ENCODE measurements at regions of chr1 and their contacts with region 1.

Region 1: DNA sequence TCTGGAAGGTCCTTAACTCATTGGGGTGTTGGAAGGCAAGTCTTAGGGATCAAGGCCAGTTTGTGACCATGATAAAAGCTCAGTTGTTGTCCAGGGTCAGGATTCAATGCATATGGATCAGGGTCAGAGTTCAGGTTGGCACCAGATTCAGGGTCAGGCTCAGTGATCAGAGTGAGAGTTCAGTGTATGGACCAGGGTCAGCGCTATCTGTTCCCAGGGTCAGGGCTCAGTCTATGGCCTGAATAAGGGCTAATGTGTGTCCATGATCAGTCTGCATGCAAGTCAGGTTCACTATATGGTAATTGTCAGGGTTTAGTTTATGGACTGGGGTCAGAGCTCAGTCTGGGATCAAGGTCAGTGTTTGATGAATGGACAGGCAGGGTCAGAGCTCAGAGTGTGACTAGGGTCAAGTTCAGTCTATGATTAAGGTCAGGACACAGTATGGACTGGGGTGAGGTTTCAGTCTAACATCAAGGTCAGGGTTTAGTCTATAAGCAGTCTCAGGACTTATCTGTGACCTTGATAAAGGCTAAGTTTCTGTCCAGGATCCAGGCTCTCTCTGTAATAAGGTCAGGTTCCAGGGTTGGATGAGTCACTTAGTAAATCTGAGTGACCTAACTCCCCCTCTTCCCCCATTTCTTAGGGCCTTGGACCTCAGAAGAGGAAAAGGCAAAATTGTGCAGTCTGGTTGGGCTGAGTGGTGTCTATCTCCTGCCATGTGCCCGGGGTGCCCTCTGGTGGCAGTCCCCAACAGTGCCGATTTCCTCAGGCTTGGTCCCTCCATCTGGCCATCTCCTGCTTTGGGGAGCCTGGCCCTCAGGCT is 23.8 kb downstream of the KNCN start:
- DNase-seq: peak; percentile 85 to 88
- ATAC-seq: peak; percentile 85 to 92 (median 86)
- H3K4me3 ChIP-seq: no peak overlapping the region
- H3K27ac ChIP-seq: no peak overlapping the region
- H3K4me1 ChIP-seq: no peaks in the 10 kb centered on the region
- H3K27me3 ChIP-seq: peaks cover 0 to 10% (median 6%) of the 10 kb centered on the region in 3 donors
- CTCF ChIP-seq: peak; percentile 86

Region 2: DNA sequence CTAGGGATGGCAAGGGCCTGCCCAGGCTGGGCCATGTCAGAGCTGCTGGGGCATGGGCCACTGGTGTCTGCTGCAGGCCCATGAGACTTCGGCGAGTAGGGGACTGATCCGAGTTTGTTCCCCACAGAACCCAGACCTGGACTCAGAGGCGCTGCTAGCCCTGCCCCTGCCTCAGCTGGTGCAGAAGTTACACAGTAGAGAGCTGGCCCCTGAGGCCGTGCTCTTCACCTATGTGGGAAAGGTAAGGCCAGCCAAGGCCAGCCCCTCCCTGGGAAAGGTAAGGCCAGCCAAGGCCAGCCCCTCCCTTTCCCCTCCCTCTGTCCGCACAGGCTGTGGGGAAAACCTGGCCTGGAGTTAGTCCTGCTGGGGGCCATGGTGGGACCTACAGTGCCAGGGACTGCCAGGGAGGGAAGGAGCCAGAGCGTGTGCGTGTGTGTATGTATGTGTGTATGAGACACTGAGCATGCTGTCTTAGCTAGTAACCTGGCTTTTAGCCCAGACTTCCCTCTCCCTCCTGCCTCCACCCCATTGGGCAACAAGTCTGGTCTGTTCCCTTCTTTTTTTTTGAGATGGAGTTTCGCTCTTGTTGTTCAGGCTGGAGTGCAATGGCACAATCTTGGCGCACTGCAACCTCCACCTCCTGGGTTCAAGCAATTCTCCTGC is 125.6 kb before region 1 on chr1:
- intact Hi-C with region 1: loop called (anchors 1 kb)
- DNase-seq: peak; percentile 45 to 87
- ATAC-seq: peak; percentile 64 to 92 (median 82)
- H3K4me3 ChIP-seq: peak overlapping the region; percentile 30
- H3K27ac ChIP-seq: peak overlapping the region; percentile 60
- H3K4me1 ChIP-seq: peaks cover 29% of the 10 kb centered on the region
- H3K27me3 ChIP-seq: no peaks in the 10 kb centered on the region
- CTCF ChIP-seq: no peak

Region 3: GRCh38 chr1:46446646-46447498 is 80.8 kb before region 1 on chr1:
- intact Hi-C with region 1: loop called (anchors 1 to 2 kb)
- DNase-seq: peak; percentile 71 to 86
- ATAC-seq: peak; percentile 52 to 81 (median 75)
- H3K4me3 ChIP-seq: no peak overlapping the region
- H3K27ac ChIP-seq: no peak overlapping the region
- H3K4me1 ChIP-seq: no peaks in the 10 kb centered on the region
- H3K27me3 ChIP-seq: peaks cover 0 to 41% (median 13%) of the 10 kb centered on the region in 3 donors
- CTCF ChIP-seq: peak; percentile 87

Region 4: DNA sequence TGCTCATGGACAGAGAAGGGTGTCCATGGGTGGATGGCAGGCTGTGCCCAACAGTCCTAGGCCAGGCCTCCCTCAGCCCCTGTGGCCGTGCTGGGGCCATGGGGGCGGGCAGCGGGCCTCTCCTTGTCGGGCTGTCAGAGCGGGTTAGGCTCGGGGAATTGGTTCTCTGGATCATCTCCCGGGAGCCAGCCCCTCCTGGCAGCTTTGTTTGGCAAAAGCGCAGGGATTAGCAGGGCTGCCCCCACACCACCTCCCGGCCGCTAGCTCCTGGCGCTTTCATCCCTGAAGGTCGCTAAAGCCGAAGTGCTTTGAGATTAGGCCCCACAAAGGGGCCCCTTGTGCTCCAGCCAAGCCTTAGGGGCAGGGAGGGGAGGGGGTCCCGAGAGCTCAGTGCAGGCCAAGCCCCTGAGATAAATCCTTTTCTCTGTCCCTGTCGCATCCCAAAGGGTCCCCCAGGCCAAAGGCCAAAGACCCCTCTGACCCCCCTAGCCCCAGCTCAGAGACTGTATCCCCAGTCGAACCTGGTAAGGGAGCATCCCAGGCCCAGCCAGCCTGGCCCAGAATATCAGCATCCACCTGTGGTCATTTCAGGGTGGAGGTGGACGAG is 47.8 kb before region 1 on chr1:
- intact Hi-C with region 1: loop called in 1 of 2 experiments (anchors 1 kb)
- DNase-seq: no peak
- ATAC-seq: no peak
- H3K4me3 ChIP-seq: no peak overlapping the region
- H3K27ac ChIP-seq: no peak overlapping the region
- H3K4me1 ChIP-seq: no peaks in the 10 kb centered on the region
- H3K27me3 ChIP-seq: peaks cover 0 to 27% (median 5%) of the 10 kb centered on the region in 3 donors
- CTCF ChIP-seq: no peak

Region 5: GRCh38 chr1:46692811-46693770 is 165.4 kb after region 1 on chr1:
- intact Hi-C with region 1: no loop called
- DNase-seq: no peak
- ATAC-seq: peak in 1 of 4 donors; percentile 36
- H3K4me3 ChIP-seq: no peak overlapping the region
- H3K27ac ChIP-seq: no peak overlapping the region
- H3K4me1 ChIP-seq: peaks cover 35% of the 10 kb centered on the region
- H3K27me3 ChIP-seq: no peaks in the 10 kb centered on the region
- CTCF ChIP-seq: no peak

Region 6: DNA sequence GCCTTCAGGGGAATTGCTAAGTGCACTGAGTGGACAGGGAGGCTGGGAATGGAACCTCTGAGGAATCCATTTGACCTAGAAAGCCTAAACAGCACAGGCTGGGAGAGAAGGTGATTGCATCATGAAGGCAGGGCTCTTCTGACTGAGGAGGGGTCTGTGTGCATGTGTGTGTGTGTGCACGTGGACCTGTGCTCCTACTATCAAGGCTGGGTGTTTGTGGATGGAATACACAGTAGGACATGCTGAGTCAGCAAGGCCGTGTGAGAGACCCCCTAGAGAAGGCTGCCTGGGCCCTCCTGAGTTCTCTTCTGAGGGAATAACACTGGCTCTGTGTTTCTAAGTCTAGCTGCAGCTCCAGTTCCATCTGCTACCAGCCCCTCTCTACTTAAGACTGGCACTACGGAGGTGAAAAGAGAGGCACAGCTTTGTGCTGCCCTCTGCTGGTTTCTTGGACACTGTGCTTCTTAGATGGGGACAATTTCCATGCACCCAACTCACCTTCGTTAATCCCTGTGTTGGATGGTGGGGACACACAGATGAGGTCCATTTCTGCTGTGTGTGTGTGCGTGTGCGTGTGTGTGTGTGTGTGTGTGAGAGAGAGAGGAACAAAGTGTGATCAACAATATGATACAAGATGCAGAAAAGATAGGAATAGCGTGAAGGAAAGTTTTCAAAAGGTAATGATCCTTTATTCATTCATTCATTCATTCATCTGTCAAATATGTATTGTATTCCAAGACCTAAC is 197.5 kb after region 1 on chr1:
- intact Hi-C with region 1: loop called (anchors 5 kb)
- DNase-seq: peak; percentile 38 to 70
- ATAC-seq: peak; percentile 89 to 99 (median 94)
- H3K4me3 ChIP-seq: no peak overlapping the region
- H3K27ac ChIP-seq: no peak overlapping the region
- H3K4me1 ChIP-seq: peaks cover 4% of the 10 kb centered on the region
- H3K27me3 ChIP-seq: peaks cover 0 to 6% (median 0%) of the 10 kb centered on the region in 3 donors
- CTCF ChIP-seq: peak; percentile 80

Region 7: GRCh38 chr1:47192458-47193384 is 665.0 kb after region 1 on chr1:
- intact Hi-C with region 1: no loop called
- DNase-seq: peak; percentile 77 to 88
- ATAC-seq: peak; percentile 36 to 49 (median 40)
- H3K4me3 ChIP-seq: no peak overlapping the region
- H3K27ac ChIP-seq: no peak overlapping the region
- H3K4me1 ChIP-seq: peaks cover 15% of the 10 kb centered on the region
- H3K27me3 ChIP-seq: peaks cover 0 to 3% (median 0%) of the 10 kb centered on the region in 3 donors
- CTCF ChIP-seq: peak; percentile 94

Measured in psoas muscle (tissue), 8 donors.